Activated CD8-positive, alpha-beta T cell treated with anti-CD3 and anti-CD28 coated beads, Interleukin-2, amount 10 ng/mL, durations not matched to agents 7 days and 5 days (primary cell): ENCODE measurements at regions of chr7 and their contacts with region 1.

Region 1: DNA sequence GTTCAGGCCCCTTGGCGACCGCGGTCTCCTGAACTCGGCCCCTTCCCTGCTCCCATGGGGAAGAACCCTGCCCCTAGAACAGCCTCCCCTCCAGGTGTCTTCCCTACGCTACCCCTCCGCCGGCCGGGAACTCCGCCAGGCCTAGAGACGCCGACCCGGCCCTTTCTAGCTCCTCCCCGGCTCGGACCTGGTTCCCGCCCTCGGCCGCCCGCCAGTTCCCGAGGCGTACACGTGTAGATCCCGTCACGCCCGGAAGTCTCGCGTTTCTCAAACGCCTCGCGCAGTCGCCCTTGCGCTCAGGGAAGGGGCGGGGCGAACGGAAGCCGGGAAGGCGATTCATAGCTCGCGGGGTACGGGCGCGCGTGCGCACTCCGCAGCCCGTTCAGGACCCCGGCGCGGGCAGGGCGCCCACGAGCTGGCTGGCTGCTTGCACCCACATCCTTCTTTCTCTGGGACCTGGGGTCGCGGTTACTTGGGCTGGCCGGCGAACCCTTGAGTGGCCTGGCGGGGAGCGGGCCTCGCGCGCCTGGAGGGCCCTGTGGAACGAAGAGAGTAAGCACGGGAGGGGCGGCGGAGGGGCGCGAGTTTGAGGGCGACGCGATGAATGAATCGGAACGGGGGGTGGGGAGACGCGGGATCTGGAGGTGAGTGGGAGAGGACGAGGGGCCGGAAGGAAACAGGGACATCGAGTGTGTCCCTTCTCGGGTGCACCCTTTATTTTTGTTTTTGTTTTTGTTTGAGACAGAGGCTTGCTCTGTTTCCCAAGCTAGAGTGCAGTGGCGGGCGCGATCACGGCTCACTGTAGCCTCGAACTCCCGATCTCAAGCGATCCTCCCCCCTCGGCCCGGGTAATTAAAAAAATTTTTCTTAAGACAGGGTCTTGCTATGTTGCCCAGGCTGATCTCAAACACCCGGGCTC is at the start of gene POP7:
- DNase-seq: peak; percentile 99
- ATAC-seq: peak; percentile 96
- H3K4me3 Mint-ChIP-seq: peak within 1 kb of the TSS; percentile 96
- H3K27ac Mint-ChIP-seq: peak within 1 kb of the TSS; percentile 98
- H3K4me1 Mint-ChIP-seq: peaks cover 19% of the 10 kb centered on the region
- H3K27me3 Mint-ChIP-seq: peaks cover 4% of the 10 kb centered on the region
- total RNA-seq, gene POP7: 43.6 to 48.3 TPM

Region 2: GRCh38 chr7:100221231-100221718 is 484.7 kb before region 1 on chr7:
- CTCF ChIA-PET with region 1: no interaction called
- POLR2A ChIA-PET with region 1: no interaction called
- DNase-seq: peak; percentile 83
- ATAC-seq: peak; percentile 50
- H3K4me3 Mint-ChIP-seq: peak overlapping the region; percentile 95
- H3K27ac Mint-ChIP-seq: peak overlapping the region; percentile 98
- H3K4me1 Mint-ChIP-seq: peaks cover 65% of the 10 kb centered on the region
- H3K27me3 Mint-ChIP-seq: no peaks in the 10 kb centered on the region

Region 3: GRCh38 chr7:100604028-100604975 is 101.7 kb before region 1 on chr7:
- CTCF ChIA-PET with region 1: interaction called, 14 read pairs
- POLR2A ChIA-PET with region 1: no interaction called
- DNase-seq: peak; percentile 90
- ATAC-seq: peak; percentile 79
- H3K4me3 Mint-ChIP-seq: peak overlapping the region; percentile 89
- H3K27ac Mint-ChIP-seq: peak overlapping the region; percentile 97
- H3K4me1 Mint-ChIP-seq: peaks cover 50% of the 10 kb centered on the region
- H3K27me3 Mint-ChIP-seq: peaks cover 6% of the 10 kb centered on the region

Region 4: GRCh38 chr7:100632951-100633717 is 72.9 kb before region 1 on chr7:
- CTCF ChIA-PET with region 1: interaction called, 19 read pairs
- POLR2A ChIA-PET with region 1: interaction called, 3 read pairs
- DNase-seq: peak; percentile 68
- ATAC-seq: peak; percentile 69
- H3K4me3 Mint-ChIP-seq: peak overlapping the region; percentile 83
- H3K27ac Mint-ChIP-seq: peak overlapping the region; percentile 88
- H3K4me1 Mint-ChIP-seq: peaks cover 46% of the 10 kb centered on the region
- H3K27me3 Mint-ChIP-seq: peaks cover 5% of the 10 kb centered on the region

Region 5: DNA sequence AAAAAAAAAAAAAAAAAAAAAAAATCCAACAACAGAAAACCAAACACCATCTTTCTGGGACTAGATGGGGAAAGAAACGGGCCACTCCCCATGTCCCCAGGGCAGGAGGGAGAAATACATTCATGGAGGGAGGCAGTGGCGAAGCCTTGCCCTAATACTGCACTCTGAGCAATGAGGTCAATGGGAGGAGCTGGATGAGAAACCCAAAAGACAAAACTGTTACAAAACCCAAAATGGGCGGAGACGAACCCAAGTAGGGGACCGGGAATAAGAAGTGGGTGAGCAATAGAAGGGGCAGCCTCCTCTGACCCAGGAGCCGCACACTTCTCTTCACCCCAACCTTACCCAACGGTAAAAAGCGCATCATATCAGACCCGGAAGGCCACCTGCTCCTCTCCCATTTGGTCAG is 25.8 kb before region 1 on chr7:
- CTCF ChIA-PET with region 1: interaction called, 12 read pairs
- POLR2A ChIA-PET with region 1: interaction called, 3 read pairs
- DNase-seq: no peak
- ATAC-seq: no peak
- H3K4me3 Mint-ChIP-seq: no peak overlapping the region
- H3K27ac Mint-ChIP-seq: peak overlapping the region; percentile 1
- H3K4me1 Mint-ChIP-seq: peaks cover 34% of the 10 kb centered on the region
- H3K27me3 Mint-ChIP-seq: no peaks in the 10 kb centered on the region

Region 6: GRCh38 chr7:100719523-100720319 is 13.7 kb after region 1 on chr7:
- CTCF ChIA-PET with region 1: interaction called, 62 read pairs
- POLR2A ChIA-PET with region 1: interaction called, 4 read pairs
- DNase-seq: no peak
- ATAC-seq: peak; percentile 20
- H3K4me3 Mint-ChIP-seq: no peak overlapping the region
- H3K27ac Mint-ChIP-seq: no peak overlapping the region
- H3K4me1 Mint-ChIP-seq: no peaks in the 10 kb centered on the region
- H3K27me3 Mint-ChIP-seq: peaks cover 36% of the 10 kb centered on the region

Region 7: DNA sequence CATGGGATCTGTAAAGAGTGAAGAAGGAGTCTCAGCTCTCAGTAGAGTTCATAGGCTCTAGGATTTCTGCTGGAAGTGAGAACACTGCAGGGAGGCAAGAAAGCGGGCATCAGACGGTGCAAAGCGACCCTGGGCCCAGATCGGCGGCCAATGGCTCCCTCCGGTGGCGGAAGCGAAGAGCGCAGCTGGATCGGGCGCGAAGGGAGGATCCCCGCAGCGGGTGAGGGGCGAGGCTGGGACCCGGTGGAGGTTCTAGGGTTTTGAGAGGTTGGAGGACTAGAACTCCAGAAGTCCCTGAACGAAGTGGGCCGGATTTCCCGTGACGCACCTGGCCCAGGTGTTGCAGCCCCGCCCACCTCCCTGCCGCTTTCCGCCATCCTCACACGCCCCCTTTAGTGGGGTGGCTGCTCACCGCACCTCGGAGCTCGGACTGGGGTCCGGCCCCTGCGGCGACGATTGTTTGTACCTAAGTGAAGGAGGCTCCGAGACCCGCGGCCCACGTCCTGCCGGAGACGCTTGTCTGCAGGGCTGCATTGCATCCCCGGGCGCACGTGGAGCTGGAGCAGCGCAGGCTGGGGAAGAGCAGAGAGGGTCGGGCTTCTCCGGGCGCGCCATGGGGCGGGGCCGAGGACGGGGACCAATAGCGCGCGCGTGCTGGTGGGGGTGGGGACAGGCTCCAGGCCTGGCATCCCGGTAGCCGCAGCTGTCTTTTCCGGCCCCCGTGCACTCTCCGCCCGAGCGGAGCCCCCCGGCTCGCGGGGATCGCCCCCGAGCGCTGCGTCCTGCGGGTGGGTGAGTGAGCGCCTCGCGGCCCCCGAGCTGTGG is 146.2 kb after region 1 on chr7 and contains the start of gene SLC12A9:
- CTCF ChIA-PET with region 1: interaction called, 87 read pairs
- POLR2A ChIA-PET with region 1: interaction called, 14 read pairs
- DNase-seq: peak; percentile 91
- ATAC-seq: peak; percentile 99
- H3K4me3 Mint-ChIP-seq: peak within 1 kb of the TSS; percentile 89
- H3K27ac Mint-ChIP-seq: peak within 1 kb of the TSS; percentile 80
- H3K4me1 Mint-ChIP-seq: peaks cover 23% of the 10 kb centered on the region
- H3K27me3 Mint-ChIP-seq: no peaks in the 10 kb centered on the region
- total RNA-seq, gene SLC12A9: 28.3 to 29.5 TPM

Region 8: DNA sequence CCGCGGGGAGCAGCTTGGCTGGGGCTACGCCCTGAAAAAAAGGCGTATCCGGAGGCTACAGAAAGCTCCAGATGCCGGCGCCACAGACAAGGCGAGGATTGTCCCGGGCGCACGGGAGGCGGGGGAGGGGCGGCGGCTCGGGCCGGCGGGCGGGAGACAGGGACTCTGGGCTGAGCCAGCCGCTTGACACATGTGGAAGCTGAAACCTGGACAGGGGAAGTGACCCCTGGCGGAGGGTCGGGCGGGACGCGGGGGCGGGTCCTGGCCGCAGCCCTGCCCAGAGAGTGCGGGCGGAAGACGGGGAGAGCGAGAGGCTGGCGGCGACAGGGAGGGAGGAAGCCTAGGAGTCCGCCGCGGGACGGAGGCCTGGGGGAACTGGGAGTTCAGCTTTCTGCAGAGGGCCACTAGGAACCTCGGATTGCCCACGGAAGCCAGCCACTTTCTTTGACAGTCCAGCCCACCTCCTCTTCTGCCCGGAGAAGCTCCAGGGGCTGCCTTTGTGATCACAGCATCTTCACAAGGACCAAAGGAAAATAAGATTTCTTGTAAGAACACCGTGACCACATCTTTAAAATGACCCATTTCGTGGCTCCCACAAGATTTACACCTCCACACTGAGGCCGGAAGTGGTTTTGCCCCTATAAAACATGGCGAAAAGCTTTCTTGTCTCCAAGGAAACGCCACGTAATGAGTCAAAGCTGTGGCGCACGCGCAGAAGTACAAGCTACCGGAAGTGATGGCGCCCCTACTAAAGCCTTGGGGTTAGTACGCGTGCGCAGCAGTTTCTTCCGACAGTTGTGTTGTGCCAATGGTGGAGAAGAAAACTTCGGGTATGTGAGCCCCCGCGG is 511.6 kb after region 1 on chr7 and contains the starts of genes PLOD3 and ZNHIT1:
- CTCF ChIA-PET with region 1: interaction called, 10 read pairs
- POLR2A ChIA-PET with region 1: interaction called, 3 read pairs
- DNase-seq: peak; percentile 99
- ATAC-seq: peak; percentile 71
- H3K4me3 Mint-ChIP-seq: peak within 1 kb of the TSS; percentile 96
- H3K27ac Mint-ChIP-seq: peak within 1 kb of the TSS; percentile 88
- H3K4me1 Mint-ChIP-seq: peaks cover 36% of the 10 kb centered on the region
- H3K27me3 Mint-ChIP-seq: no peaks in the 10 kb centered on the region
- total RNA-seq, gene PLOD3: 51.1 to 58.1 TPM
- total RNA-seq, gene ZNHIT1: 56.1 to 58.4 TPM